ENCODE measurements at regions of chr18 and their contacts with region 1.

Region 1: DNA sequence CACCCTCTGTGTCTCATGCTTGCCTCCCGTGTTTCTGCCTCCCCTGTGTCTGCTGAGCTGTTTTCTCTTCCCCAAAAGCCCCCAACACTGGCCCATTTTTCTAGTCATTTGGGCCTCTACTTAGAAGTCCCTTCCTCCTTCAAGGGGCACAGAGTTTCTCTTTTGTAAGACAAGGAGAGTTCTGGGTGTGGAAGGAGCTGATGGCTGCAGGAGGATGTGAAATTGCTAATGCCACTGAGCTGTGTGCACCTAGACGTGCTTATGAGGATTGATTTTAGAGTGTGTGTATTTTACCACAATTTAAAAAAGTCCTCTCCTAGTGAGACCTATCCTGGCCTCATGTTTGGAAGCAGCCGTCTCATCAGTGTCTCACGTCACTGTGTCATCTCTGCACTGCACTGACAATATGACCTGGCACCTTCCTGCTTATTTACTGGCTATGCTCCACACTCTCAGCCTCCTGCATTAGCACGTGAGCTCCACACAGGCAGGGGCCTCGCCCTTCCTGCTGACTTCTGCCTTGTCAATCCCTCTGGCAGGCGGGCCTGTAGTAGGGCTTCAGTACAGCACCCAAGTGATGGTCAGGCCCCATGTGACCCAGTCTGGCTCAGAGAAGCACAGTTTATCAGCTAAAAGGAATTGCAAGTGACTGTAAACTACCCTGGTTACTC is 8.0 kb upstream of the MBP start:
- DNase-seq: peak in 7 of 9 experiments; percentile 19 to 72 (median 52)
- ATAC-seq: peak; percentile 95
- H3K4me3 ChIP-seq: no peak overlapping the region
- H3K4me3 Mint-ChIP-seq: no peak overlapping the region
- H3K27ac ChIP-seq: peak overlapping the region in 1 of 2 experiments; percentile 24
- H3K27ac Mint-ChIP-seq: peak overlapping the region; percentile 82
- H3K4me1 ChIP-seq: peaks cover 20% of the 10 kb centered on the region
- H3K4me1 Mint-ChIP-seq: peaks cover 29% of the 10 kb centered on the region
- H3K27me3 ChIP-seq: no peaks in the 10 kb centered on the region
- H3K27me3 Mint-ChIP-seq: no peaks in the 10 kb centered on the region
- CTCF ChIP-seq: no peak

Region 2: GRCh38 chr18:77207540-77207939 is 67.0 kb after region 1 on chr18:
- CTCF ChIA-PET with region 1: interaction called, 5 read pairs
- POLR2A ChIA-PET with region 1: no interaction called
- intact Hi-C with region 1: loop called in 1 of 2 experiments (anchors 2 kb)
- DNase-seq: peak; percentile 29 to 80 (median 58)
- ATAC-seq: peak; percentile 93
- H3K4me3 ChIP-seq: no peak overlapping the region
- H3K4me3 Mint-ChIP-seq: peak overlapping the region; percentile 62
- H3K27ac ChIP-seq: no peak overlapping the region
- H3K27ac Mint-ChIP-seq: peak overlapping the region; percentile 34
- H3K4me1 ChIP-seq: peaks cover 40% of the 10 kb centered on the region
- H3K4me1 Mint-ChIP-seq: peaks cover 46% of the 10 kb centered on the region
- H3K27me3 ChIP-seq: no peaks in the 10 kb centered on the region
- H3K27me3 Mint-ChIP-seq: peaks cover 2% of the 10 kb centered on the region
- CTCF ChIP-seq: peak; percentile 57